Lower leg skin (tissue), 4 donors: ENCODE measurements at regions of chr13 and their contacts with region 1.

Region 1: DNA sequence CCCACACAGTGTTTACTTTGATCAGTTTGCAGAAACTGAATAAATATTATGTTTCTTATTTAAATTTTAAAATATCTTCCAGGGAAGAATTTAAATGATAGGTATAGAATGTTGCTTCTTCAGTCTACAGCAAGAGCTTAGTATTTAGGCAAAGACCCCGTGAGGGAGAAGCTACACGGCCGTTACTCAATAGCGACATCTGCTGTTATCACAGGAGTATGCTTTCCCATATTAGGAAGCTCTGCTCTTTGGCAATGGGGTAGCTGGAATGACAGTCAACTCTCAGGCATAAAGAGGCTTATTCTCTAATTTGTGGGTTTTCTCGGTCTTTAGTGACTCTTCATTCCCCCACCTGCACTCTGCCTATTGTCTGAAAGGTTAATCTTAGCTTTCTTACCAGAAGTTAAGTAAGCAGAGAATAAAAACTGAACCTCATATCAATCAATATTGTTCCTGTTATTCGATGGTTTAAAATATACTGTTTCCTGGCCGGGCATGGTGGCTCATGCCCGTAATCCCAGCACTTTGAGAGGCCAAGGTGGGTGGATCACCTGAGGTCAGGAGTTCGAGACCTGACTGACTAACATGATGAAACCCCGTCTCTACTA is 13.2 kb upstream of the LHFPL6 start:
- DNase-seq: peak in 1 of 2 donors; percentile 38
- H3K4me3 ChIP-seq: no peak overlapping the region
- CTCF ChIP-seq: peak in 1 of 3 donors; percentile 54
- POLR2A ChIP-seq: no peak

Region 2: DNA sequence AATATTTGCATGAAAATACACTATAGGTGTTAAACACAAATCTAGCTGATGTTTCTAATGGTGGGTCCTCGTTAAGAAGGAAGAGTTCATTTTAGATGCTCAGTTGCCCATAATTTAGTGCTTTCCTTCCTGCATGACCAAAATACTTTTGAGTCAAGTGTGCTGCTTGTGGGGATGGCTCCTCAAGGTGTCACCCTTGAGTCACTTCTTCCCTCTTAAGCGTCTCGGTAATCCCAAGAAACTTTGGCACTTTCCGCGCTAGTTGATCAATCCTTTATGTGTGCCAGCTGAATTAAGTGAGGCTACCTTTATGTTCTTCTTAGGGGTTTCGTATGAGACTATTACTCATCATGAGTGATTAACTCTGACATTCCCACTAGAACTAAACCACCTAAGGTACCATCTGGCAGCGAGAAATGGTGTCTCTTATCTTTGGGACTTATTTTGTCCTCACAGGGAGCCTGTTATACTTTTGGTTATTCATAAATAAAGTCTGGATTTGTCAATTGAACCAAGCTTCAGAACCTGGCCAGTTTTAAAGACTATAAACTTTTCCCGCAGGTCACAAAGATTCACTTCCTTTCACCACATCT is 471.2 kb before region 1 on chr13:
- intact Hi-C with region 1: loop called (anchors 5 kb)
- DNase-seq: peak; percentile 57 to 86
- H3K4me3 ChIP-seq: no peak overlapping the region
- CTCF ChIP-seq: no peak
- POLR2A ChIP-seq: no peak

Region 3: GRCh38 chr13:39273953-39274738 is 342.0 kb before region 1 on chr13:
- intact Hi-C with region 1: loop called (anchors 10 kb)
- DNase-seq: no peak
- H3K4me3 ChIP-seq: no peak overlapping the region
- CTCF ChIP-seq: no peak
- POLR2A ChIP-seq: no peak